HEK293 (cell line): ENCODE measurements at regions of chr7 and their contacts with region 1.

Region 1: DNA sequence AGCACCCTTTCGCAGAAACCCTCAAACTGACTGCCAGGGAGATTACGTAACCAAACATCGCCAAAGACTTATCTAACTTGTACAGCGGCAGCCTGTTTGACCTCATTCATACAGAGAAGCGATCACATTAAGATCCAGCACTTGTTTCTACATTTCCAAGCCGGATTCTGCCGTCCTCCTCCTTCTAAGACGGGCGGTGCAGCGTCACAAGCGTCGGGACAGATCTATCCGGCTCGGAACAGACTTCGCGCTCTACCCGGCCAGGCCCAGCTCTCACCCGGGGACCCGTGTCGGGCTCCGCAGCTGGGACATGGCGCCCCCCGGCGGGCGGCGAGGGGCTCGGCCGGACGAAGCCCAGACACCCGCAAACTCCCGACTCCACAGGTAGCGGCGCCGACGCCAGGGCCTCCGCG is 373 bp downstream of the H2AZ2 start:
- H3K4me3 ChIP-seq: peak overlapping the region; percentile 77
- H3K27ac ChIP-seq: peak overlapping the region; percentile 88
- H3K4me1 ChIP-seq: peaks cover 12% of the 10 kb centered on the region
- CTCF ChIP-seq: peak; percentile 95

Region 2: GRCh38 chr7:44581879-44582603 is 265.5 kb before region 1 on chr7 and contains the start of gene TMED4:
- CTCF ChIA-PET with region 1: no interaction called
- POLR2A ChIA-PET with region 1: interaction called, 14 read pairs
- H3K4me3 ChIP-seq: peak within 1 kb of the TSS; percentile 88
- H3K27ac ChIP-seq: peak within 1 kb of the TSS; percentile 94
- H3K4me1 ChIP-seq: no peaks in the 10 kb centered on the region
- CTCF ChIP-seq: peak; percentile 45; the same call in 1 of the 2 replicates

Region 3: GRCh38 chr7:44587843-44588711 is 259.4 kb before region 1 on chr7:
- CTCF ChIA-PET with region 1: interaction called, 4 read pairs
- POLR2A ChIA-PET with region 1: interaction called, 15 read pairs
- H3K4me3 ChIP-seq: no peak overlapping the region
- H3K27ac ChIP-seq: no peak overlapping the region
- H3K4me1 ChIP-seq: no peaks in the 10 kb centered on the region
- CTCF ChIP-seq: peak; percentile 76; the same call in 1 of the 2 replicates

Region 4: GRCh38 chr7:45278763-45279398 is 431.4 kb after region 1 on chr7:
- CTCF ChIA-PET with region 1: no interaction called
- POLR2A ChIA-PET with region 1: interaction called, 10 read pairs
- H3K4me3 ChIP-seq: no peak overlapping the region
- H3K27ac ChIP-seq: no peak overlapping the region
- H3K4me1 ChIP-seq: no peaks in the 10 kb centered on the region
- CTCF ChIP-seq: no peak